Activated CD4-positive, alpha-beta memory T cell treated with anti-CD3 and anti-CD28 coated beads, Interleukin-2, amount 10 ng/mL, durations not matched to agents 7 days and 5 days (primary cell): ENCODE measurements at regions of chr16 and their contacts with region 1.

Region 1: GRCh38 chr16:19555162-19555937 is at the start of gene VPS35L:
- DNase-seq: peak; percentile 96
- H3K4me3 Mint-ChIP-seq: peak within 1 kb of the TSS; percentile 86
- H3K27ac Mint-ChIP-seq: peak within 1 kb of the TSS; percentile 89
- H3K4me1 Mint-ChIP-seq: peaks cover 24% of the 10 kb centered on the region
- H3K27me3 Mint-ChIP-seq: no peaks in the 10 kb centered on the region
- total RNA-seq, gene VPS35L: 48.7 to 55.4 TPM

Region 2: GRCh38 chr16:19474617-19475016 is 80.7 kb before region 1 on chr16:
- CTCF ChIA-PET with region 1: no interaction called
- POLR2A ChIA-PET with region 1: no interaction called
- DNase-seq: no peak
- H3K4me3 Mint-ChIP-seq: no peak overlapping the region
- H3K27ac Mint-ChIP-seq: no peak overlapping the region
- H3K4me1 Mint-ChIP-seq: no peaks in the 10 kb centered on the region
- H3K27me3 Mint-ChIP-seq: peaks cover 2% of the 10 kb centered on the region

Region 3: DNA sequence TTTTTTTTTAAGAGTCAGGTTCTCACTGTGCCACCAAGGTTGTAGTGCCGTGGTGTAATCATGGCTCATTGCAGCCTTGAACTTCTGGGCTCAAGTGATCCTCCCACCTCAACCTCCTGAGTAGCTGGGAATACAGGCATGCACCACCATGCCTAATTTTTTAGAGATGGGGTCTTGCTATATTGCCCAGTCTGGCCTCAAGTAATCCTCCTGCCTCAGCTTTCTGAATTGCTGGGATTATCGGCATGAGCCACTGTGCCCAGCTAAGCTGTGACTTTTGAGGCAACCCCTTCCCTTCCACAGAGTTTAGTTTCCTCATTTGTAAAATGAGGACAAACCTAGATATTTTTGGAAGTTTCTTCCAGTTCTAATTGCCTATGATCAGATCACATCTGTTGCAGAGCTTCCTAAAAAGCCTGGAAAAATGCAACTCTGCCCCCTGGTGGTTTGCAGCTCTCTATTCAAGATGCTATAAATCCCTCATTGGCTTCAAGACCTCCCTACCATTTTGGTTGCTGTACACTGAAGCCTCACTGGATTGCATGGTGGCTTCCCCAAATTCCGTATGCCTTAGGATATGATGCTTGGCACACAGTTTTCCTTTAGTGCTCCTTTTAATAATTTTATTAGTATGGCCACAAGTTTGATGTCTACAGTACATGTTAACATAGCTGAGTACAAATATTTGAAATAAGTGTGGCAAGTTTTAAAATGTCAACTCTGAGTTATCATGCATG is 52.8 kb before region 1 on chr16:
- CTCF ChIA-PET with region 1: interaction called, 10 read pairs
- POLR2A ChIA-PET with region 1: no interaction called
- DNase-seq: peak; percentile 75
- H3K4me3 Mint-ChIP-seq: no peak overlapping the region
- H3K27ac Mint-ChIP-seq: no peak overlapping the region
- H3K4me1 Mint-ChIP-seq: peaks cover 22% of the 10 kb centered on the region
- H3K27me3 Mint-ChIP-seq: no peaks in the 10 kb centered on the region

Region 4: GRCh38 chr16:19542138-19542821 is 13.1 kb before region 1 on chr16:
- CTCF ChIA-PET with region 1: interaction called, 21 read pairs
- POLR2A ChIA-PET with region 1: interaction called, 11 read pairs
- DNase-seq: no peak
- H3K4me3 Mint-ChIP-seq: no peak overlapping the region
- H3K27ac Mint-ChIP-seq: no peak overlapping the region
- H3K4me1 Mint-ChIP-seq: peaks cover 19% of the 10 kb centered on the region
- H3K27me3 Mint-ChIP-seq: no peaks in the 10 kb centered on the region

Region 5: DNA sequence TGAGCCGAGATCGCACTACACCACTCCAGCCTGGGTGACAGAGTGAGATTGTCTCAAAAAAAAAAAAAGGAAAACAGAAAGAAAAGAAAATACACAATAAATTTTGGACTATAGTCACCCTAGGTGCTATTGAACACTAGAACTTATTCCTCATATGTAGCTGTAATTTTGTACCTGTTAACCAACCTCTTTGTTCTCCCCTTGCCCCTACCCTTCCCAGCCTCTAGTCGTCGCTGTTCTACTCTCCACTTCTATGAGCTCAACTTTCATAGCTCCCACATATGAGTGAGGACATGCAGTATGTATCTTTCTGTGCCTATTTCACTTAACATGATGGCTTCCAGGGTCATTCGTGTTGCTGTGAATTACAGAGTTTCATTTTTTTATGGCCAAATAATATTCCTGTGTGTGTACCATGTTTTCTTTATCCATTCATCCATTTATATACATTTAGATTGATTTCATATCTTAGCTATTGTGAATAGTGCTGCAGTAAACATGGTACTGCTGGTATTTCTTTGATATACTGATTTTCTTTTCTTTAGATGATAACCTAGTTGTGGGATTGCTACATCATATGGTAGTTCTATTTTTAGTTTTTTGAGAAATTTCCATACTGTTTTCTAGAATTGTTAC is 28.4 kb after region 1 on chr16:
- CTCF ChIA-PET with region 1: interaction called, 21 read pairs
- POLR2A ChIA-PET with region 1: interaction called, 5 read pairs
- DNase-seq: peak; percentile 25
- H3K4me3 Mint-ChIP-seq: no peak overlapping the region
- H3K27ac Mint-ChIP-seq: no peak overlapping the region
- H3K4me1 Mint-ChIP-seq: peaks cover 2% of the 10 kb centered on the region
- H3K27me3 Mint-ChIP-seq: no peaks in the 10 kb centered on the region

Region 6: GRCh38 chr16:19886073-19886941 is 331.0 kb after region 1 on chr16:
- CTCF ChIA-PET with region 1: interaction called, 16 read pairs
- POLR2A ChIA-PET with region 1: interaction called, 4 read pairs
- DNase-seq: peak; percentile 83
- H3K4me3 Mint-ChIP-seq: peak overlapping the region; percentile 70
- H3K27ac Mint-ChIP-seq: no peak overlapping the region
- H3K4me1 Mint-ChIP-seq: peaks cover 17% of the 10 kb centered on the region
- H3K27me3 Mint-ChIP-seq: peaks cover 31% of the 10 kb centered on the region